Colonic mucosa (tissue), 4 donors: ENCODE measurements at regions of chr2 and their contacts with region 1.

Region 1: DNA sequence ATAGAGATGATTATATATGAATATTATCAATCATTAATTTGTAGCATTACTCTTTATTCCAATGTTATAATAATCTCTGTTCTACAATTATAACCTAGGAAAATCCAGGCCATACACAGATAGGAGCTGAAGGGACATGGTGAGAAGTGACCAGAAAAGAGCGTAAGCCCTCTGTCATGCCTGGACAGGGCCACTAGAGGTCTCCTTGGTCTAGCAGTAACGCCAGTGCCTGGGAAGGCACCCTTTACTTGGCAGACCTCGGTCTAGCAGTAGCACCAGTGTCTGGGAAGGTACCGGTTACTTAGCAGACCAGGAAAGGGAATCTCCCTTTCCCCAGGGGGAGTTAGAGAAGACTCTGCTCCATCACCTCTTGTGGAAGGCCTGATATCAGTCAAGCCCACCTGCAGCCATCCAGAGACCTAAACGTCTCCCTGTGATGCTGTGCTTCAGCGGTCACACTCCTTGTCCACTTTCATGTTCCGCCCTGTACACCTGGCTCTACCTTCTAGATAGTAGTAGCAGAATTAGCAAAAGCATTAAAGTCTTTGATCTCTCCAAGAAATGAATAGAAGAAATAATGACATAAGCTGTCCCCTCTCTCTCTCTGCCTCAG is 447.5 kb upstream of the FSIP2 start:
- DNase-seq: peak; percentile 56
- H3K4me3 ChIP-seq: no peak overlapping the region
- H3K27ac ChIP-seq: no peak overlapping the region
- H3K4me1 ChIP-seq: no peaks in the 10 kb centered on the region
- H3K27me3 ChIP-seq: no peaks in the 10 kb centered on the region
- CTCF ChIP-seq: peak; percentile 59

Region 2: GRCh38 chr2:185179743-185180142 is 111.4 kb before region 1 on chr2:
- intact Hi-C with region 1: no loop called
- DNase-seq: no peak
- H3K4me3 ChIP-seq: no peak overlapping the region
- H3K27ac ChIP-seq: no peak overlapping the region
- H3K4me1 ChIP-seq: no peaks in the 10 kb centered on the region
- H3K27me3 ChIP-seq: no peaks in the 10 kb centered on the region
- CTCF ChIP-seq: no peak

Region 3: DNA sequence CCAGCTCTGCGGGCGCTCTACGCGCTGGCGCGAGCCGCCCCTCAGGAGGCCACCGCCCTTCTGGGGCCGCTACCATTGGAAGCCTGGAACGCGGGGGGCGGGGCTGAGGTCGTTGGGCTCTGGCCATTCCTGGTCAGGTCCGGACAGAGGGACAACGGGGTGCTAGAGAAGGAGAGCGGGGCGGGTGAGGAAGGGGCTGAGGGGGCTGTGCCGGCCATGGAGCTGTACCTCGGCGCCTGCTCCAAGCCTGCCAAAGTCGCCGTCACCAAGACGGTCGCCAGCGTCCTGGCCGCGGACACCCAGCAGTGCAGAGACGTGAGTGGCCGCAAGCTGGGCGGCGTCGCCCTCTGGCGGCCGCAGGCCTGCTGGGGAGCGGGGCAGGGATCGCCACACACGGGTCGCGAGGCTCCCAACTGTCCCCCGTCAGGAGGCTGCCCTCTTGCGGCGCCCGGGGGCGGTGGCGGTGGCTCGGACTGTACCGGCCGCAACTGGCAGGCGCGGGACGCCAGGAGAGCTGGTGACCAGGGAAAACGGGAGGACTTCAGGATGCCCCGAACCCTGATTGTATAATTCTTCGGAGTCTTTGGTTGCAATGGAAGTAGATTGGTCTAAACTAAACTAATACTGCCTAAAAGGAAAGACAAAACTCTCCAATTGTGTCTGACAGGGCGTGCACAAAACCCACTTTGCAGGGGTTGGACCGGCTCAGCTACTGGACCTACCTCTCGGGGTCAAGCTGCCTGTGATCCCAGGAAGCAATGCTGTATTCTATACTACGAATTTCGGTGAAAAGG is 447.7 kb after region 1 on chr2 and contains the start of gene FSIP2:
- intact Hi-C with region 1: loop called (anchors 5 kb)
- DNase-seq: peak; percentile 89
- H3K4me3 ChIP-seq: peak within 1 kb of the TSS; percentile 30
- H3K27ac ChIP-seq: no peak within 1 kb of the TSS
- H3K4me1 ChIP-seq: no peaks in the 10 kb centered on the region
- H3K27me3 ChIP-seq: no peaks in the 10 kb centered on the region
- CTCF ChIP-seq: peak; percentile 85
- total RNA-seq, gene FSIP2: 4.4 to 5.9 TPM